Activated T-helper 1 cell treated with anti-CD3 and anti-CD28 coated beads, Interleukin-12 subunit alpha, Interleukin-12 subunit beta, Interleukin-2, Interleukin-4 antibody, amounts not matched to agents 30 ng/mL and 10 ng/mL and 1 ng/mL, durations not matched to agents 14 hours and 24 hours and 36 hours (primary cell): ENCODE measurements at regions of chr16 and their contacts with region 1.

Region 1: DNA sequence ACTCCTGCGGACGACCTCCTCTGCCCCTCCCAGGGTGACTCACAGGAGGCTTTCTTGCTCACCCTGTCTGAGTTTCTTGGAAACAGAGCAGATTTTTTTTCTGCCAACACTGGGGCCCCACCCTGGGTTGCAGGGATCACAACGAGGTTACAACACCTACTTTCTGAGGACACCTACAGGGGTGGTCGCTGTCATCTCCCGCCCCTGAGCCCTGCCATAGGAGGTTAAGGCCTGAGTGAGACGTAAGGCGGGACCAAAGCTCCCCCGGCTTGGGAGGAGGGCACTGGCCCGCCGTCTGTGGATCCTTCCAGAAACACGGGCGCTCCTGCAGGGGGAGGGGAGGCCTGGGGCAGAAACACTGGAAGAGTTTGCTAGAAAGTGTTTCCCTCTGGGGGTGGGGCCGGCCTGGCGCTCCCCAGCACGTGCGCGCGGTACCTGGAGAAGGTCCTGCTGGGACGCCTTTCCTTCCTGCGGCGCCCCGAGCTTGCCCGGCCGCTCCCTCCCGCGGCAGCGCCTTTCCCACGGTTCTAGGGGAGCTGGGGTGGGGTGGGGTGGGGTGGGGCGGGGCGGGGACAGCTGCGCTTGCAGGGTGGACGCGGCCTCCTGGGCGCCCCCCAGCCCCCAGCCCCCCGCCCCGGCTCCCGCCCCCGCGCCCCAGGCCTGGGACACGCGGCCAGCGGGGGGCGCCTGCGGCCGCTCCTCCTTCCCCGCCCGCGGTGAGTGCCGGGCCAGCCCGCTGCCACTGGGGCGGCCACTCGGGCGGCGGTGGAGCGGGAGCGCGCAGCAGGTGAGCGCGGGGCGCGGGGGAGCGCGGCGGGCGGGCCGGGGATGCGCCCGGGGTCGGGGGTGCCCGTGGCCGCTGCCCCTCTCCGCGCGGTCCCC is 20.7 kb upstream of the ADCY7 start:
- DNase-seq: peak; percentile 34
- H3K4me3 Mint-ChIP-seq: peak overlapping the region; percentile 83
- H3K27ac Mint-ChIP-seq: peak overlapping the region; percentile 71
- H3K4me1 Mint-ChIP-seq: peaks cover 16% of the 10 kb centered on the region
- H3K27me3 Mint-ChIP-seq: peaks cover 6% of the 10 kb centered on the region

Region 2: GRCh38 chr16:49952386-49952785 is 293.3 kb before region 1 on chr16:
- intact Hi-C with region 1: no loop called
- DNase-seq: no peak
- H3K4me3 Mint-ChIP-seq: no peak overlapping the region
- H3K27ac Mint-ChIP-seq: no peak overlapping the region
- H3K4me1 Mint-ChIP-seq: no peaks in the 10 kb centered on the region
- H3K27me3 Mint-ChIP-seq: peaks cover 3% of the 10 kb centered on the region

Region 3: DNA sequence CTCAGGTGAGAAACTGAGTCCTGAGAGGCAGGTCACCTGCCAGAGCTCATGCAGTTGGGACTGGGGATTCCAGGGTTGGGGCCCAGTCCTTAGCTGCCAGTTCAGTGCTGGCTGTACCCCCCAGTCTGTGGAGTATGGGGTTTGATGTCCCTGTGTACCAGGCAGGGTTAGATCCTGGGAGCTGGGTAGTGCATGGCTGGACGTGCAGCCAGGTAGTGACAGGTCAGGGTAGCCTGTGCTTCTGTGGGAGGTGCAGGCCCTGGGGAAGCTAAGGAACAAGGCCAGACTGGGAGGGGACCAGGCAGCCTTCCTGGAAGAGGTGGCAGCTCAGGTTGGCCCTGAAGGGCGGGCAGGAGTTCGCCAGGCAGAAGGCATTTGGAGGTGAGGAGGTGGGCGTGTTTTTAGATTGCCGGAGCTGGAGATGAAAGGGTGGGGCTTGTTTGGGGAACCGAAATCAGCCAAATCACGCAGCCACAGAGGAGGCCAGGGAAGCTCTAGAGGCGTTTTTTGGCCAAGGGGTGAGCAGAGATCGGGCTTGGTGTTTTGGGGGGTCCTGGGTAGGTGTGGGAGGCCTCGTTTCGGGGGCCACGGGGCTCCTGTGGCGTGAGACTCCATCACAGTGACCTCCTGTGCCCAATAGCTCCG is 28.1 kb after region 1 on chr16:
- intact Hi-C with region 1: loop called (anchors 2 kb)
- DNase-seq: peak; percentile 20
- H3K4me3 Mint-ChIP-seq: peak overlapping the region; percentile 95
- H3K27ac Mint-ChIP-seq: peak overlapping the region; percentile 98
- H3K4me1 Mint-ChIP-seq: peaks cover 95% of the 10 kb centered on the region
- H3K27me3 Mint-ChIP-seq: no peaks in the 10 kb centered on the region

Region 4: GRCh38 chr16:50315346-50315997 is 69.8 kb after region 1 on chr16:
- intact Hi-C with region 1: loop called (anchors 5 kb)
- DNase-seq: no peak
- H3K4me3 Mint-ChIP-seq: no peak overlapping the region
- H3K27ac Mint-ChIP-seq: no peak overlapping the region
- H3K4me1 Mint-ChIP-seq: peaks cover 25% of the 10 kb centered on the region
- H3K27me3 Mint-ChIP-seq: no peaks in the 10 kb centered on the region